ENCODE measurements at regions of chr1 and their contacts with region 1.

Region 1: DNA sequence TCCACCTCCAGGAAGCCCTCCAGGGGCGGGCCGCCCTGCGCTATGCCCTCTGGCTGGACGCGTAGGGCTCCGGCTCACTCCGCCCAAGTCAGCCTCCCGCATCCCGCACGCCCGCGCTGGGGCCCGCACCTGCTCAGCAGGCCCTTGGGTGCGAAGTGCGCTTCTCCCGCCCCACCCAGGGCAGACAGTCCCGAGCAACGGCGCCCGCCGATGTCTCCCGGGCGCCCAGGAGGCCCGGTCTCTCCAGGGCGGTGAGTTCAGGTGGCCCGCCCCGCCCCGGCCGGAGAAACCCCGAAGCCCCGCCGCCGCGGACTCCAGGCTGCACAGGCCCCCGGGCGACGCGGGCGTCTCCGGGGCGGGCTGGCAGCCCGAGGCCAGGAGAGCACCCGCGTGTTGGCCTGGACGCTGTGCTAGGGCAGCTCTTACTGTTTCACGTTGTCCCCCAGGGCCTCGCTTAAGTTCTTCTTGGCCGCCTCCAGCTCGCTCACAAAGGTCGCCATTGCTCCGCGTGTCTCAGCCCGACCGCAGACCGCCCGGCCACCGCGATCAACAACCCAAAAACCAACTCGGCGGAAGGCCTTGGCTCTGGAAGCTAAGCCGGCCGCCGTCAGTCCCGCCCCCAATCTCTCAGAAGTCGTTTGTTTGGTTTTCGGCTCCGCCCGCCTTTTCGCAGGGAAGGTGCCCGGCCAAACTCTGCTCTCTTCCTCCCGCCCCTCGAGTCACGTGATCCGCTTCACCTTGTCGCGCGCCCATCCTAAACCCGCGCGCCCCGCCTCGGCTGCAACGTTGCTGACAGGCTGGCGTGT is at the start of gene TADA1:
- DNase-seq: peak; percentile 98
- ATAC-seq: peak; percentile 88
- H3K4me3 Mint-ChIP-seq: peak within 1 kb of the TSS; percentile 99
- H3K27ac Mint-ChIP-seq: peak within 1 kb of the TSS; percentile 99
- H3K4me1 Mint-ChIP-seq: peaks cover 31% of the 10 kb centered on the region
- H3K27me3 Mint-ChIP-seq: peaks cover 4% of the 10 kb centered on the region
- total RNA-seq, gene TADA1: 14.4 to 15.3 TPM

Region 2: GRCh38 chr1:166838766-166839599 is 37.0 kb before region 1 on chr1 and contains the start of gene POGK:
- POLR2A ChIA-PET with region 1: interaction called, 21 read pairs
- DNase-seq: peak; percentile 86
- ATAC-seq: peak; percentile 98
- H3K4me3 Mint-ChIP-seq: peak within 1 kb of the TSS; percentile 88
- H3K27ac Mint-ChIP-seq: peak within 1 kb of the TSS; percentile 88
- H3K4me1 Mint-ChIP-seq: peaks cover 35% of the 10 kb centered on the region
- H3K27me3 Mint-ChIP-seq: peaks cover 5% of the 10 kb centered on the region
- total RNA-seq, gene POGK: 36.1 to 37.7 TPM

Region 3: DNA sequence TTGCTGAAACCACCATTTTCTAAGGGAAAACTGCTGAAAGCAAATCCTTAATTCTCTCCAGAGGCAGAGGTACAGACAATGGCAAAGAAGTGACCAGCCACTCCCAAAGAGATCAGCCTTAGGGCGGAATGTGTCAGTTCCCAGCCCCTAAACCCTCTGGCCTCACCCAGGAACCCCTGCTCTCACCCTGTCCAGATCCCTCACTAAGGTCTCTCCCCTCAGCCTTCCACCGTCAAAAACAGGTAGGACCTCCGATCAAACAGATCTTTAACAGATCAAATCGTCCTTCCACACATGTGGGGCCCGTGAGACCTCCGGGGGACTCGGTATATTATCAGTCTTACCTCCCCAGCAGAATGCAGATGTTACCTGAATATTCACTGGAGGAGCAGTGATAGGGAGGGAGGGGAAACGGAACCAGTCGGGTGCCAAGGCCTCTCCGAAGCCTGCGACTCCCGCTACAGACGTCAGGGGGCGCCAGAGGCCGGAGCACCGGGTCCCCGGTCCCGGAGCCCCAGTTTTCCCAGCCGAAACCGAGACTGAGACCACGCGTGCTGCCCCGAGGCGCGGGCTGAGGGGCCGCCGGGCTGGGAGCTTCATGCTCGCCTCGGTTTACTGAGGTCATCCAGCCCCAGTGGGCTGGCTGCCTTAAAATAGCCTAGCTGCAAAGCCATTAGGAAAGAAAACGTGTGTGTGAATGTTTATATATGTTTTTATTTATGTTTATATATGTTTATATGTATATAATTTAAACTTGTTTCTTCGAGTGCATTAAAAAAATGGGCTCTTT is 190.6 kb after region 1 on chr1:
- POLR2A ChIA-PET with region 1: no interaction called
- DNase-seq: peak; percentile 88
- ATAC-seq: peak; percentile 86
- H3K4me3 Mint-ChIP-seq: peak overlapping the region; percentile 52
- H3K27ac Mint-ChIP-seq: no peak overlapping the region
- H3K4me1 Mint-ChIP-seq: peaks cover 3% of the 10 kb centered on the region
- H3K27me3 Mint-ChIP-seq: no peaks in the 10 kb centered on the region